Dorsolateral prefrontal cortex (tissue), 120 donors: ENCODE measurements at regions of chr16 and their contacts with region 1.

Region 1: GRCh38 chr16:83807710-83808572 is at the start of gene HSBP1:
- DNase-seq: peak; percentile 82 to 95 (median 91)
- H3K4me3 ChIP-seq: peak within 1 kb of the TSS; percentile 64 to 98 (median 88)
- H3K27ac ChIP-seq: peak within 1 kb of the TSS in 58 of 59 donors; percentile 32 to 93 (median 80)
- H3K27me3 ChIP-seq: no peaks in the 10 kb centered on the region
- CTCF ChIP-seq: peak in 41 of 56 donors; percentile 4 to 56 (median 32)
- total RNA-seq, gene HSBP1: 60.5 to 133 (median 98.8) TPM

Region 2: DNA sequence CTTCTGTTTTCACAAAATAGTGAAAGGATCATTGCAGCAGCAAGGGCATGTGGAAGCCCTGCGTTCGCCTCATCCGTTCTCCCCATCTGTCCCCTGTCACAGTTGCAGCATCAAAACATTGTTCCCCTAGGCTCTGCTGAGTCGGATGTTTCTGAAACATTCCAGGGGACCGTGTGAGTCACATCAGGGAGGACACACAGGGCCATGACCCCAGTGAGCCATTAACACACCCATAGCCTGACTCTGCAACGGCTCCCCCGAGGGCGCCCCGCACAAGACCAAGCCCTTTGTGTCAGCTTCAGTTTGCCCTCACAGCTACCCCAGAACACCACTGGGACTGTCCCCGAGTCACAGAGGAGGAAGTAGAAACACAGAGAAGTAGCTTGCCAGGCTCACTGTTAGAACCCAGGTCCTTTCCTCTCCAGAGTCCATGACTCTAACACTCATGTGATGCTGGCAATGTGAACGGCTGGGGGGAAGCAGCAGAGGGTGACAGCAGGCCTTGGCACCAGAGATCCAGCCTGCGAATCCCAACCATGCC is 63.4 kb before region 1 on chr16:
- intact Hi-C with region 1: loop called (anchors 5 to 10 kb)
- DNase-seq: peak in 5 of 10 donors; percentile 24 to 63 (median 50)
- H3K4me3 ChIP-seq: peak overlapping the region in 3 of 59 donors; percentile 3 to 30 (median 28)
- H3K27ac ChIP-seq: peak overlapping the region in 58 of 59 donors; percentile 18 to 95 (median 84)
- H3K27me3 ChIP-seq: peaks cover 0 to 5% (median 0%) of the 10 kb centered on the region in 45 donors
- CTCF ChIP-seq: peak in 2 of 56 donors; percentile 9 to 25

Region 3: DNA sequence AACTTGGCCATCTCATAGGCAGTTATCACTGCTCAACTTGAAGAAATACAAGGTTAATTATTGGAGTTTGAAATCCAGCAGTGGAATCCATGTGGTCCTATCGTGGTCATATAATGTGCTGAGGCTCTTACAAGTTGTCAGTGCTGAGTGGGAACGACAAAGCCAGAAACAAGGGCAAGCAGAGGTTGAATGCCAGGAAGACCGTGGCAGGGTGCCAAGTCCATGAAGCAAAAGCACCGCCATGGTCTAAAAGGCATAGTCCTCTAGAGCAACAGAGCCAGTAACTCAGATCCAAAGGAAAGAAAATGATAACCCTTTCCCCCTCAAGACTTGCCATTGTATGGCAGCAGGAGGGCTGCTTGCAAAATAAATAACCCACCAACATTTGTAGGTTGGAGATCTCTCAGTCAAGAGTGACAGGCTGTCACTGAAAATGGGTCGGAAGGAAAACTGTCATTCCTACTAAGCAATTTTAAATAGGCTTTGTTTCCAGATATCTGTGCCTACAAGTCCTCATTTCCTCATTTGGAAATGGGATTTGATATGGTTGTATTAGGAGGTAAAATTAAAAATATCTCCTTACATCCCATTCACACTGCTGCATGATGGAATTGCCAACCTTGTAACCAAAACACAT is 36.5 kb before region 1 on chr16:
- intact Hi-C with region 1: loop called (anchors 5 kb)
- DNase-seq: peak in 9 of 10 donors; percentile 21 to 67 (median 61)
- H3K4me3 ChIP-seq: peak overlapping the region in 55 of 59 donors; percentile 1 to 70 (median 48)
- H3K27ac ChIP-seq: peak overlapping the region in 56 of 59 donors; percentile 1 to 100 (median 92)
- H3K27me3 ChIP-seq: no peaks in the 10 kb centered on the region
- CTCF ChIP-seq: no peak

Region 4: GRCh38 chr16:83779886-83780285 is 28.1 kb before region 1 on chr16:
- intact Hi-C with region 1: loop called in 1 of 2 experiments (anchors 2 kb)
- DNase-seq: no peak
- H3K4me3 ChIP-seq: peak overlapping the region in 49 of 59 donors; percentile 2 to 57 (median 31)
- H3K27ac ChIP-seq: peak overlapping the region in 34 of 59 donors; percentile 1 to 77 (median 46)
- H3K27me3 ChIP-seq: no peaks in the 10 kb centered on the region
- CTCF ChIP-seq: peak in 3 of 56 donors; percentile 4 to 13 (median 11)

Region 5: GRCh38 chr16:83888672-83889044 is 80.7 kb after region 1 on chr16:
- intact Hi-C with region 1: no loop called
- DNase-seq: no peak
- H3K4me3 ChIP-seq: no peak overlapping the region
- H3K27ac ChIP-seq: no peak overlapping the region
- H3K27me3 ChIP-seq: no peaks in the 10 kb centered on the region
- CTCF ChIP-seq: no peak

Region 6: DNA sequence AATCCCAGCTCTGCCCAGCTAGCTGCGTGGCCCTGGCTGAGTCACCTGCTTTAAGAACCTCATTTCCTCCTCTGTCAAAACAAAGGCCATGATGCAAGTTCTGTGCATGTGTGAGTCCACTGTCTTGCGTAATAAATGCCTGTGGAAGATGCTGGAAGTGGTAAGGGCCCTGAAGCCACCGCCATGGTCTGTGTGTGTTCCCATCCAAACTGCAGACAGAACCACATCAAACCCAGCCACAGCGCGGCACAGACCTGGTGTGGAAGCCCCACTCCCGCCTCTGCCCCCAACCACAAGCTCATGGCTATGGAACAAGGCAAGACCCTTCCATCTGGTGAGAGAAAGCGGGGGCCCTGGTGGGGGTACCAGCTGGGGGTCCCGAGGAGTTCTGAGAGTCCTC is 186.1 kb after region 1 on chr16:
- intact Hi-C with region 1: no loop called
- DNase-seq: no peak
- H3K4me3 ChIP-seq: no peak overlapping the region
- H3K27ac ChIP-seq: peak overlapping the region in 10 of 59 donors; percentile 1 to 76 (median 42)
- H3K27me3 ChIP-seq: no peaks in the 10 kb centered on the region
- CTCF ChIP-seq: no peak